Calu3 (cell line): ENCODE measurements at regions of chr1 and their contacts with region 1.

Region 1: GRCh38 chr1:38608202-38608864 is 251.2 kb downstream of the RRAGC start:
- DNase-seq: peak; percentile 42
- H3K4me3 Mint-ChIP-seq: no peak overlapping the region
- H3K27ac Mint-ChIP-seq: no peak overlapping the region
- H3K4me1 Mint-ChIP-seq: no peaks in the 10 kb centered on the region
- H3K27me3 Mint-ChIP-seq: peaks cover 76% of the 10 kb centered on the region
- CTCF ChIP-seq: peak; percentile 68

Region 2: GRCh38 chr1:38818175-38818976 is 210.0 kb after region 1 on chr1:
- CTCF ChIA-PET with region 1: interaction called, 8 read pairs
- intact Hi-C with region 1: loop called (anchors 5 kb)
- DNase-seq: peak; percentile 60
- H3K4me3 Mint-ChIP-seq: no peak overlapping the region
- H3K27ac Mint-ChIP-seq: no peak overlapping the region
- H3K4me1 Mint-ChIP-seq: no peaks in the 10 kb centered on the region
- H3K27me3 Mint-ChIP-seq: peaks cover 99% of the 10 kb centered on the region
- CTCF ChIP-seq: peak; percentile 93

Region 3: DNA sequence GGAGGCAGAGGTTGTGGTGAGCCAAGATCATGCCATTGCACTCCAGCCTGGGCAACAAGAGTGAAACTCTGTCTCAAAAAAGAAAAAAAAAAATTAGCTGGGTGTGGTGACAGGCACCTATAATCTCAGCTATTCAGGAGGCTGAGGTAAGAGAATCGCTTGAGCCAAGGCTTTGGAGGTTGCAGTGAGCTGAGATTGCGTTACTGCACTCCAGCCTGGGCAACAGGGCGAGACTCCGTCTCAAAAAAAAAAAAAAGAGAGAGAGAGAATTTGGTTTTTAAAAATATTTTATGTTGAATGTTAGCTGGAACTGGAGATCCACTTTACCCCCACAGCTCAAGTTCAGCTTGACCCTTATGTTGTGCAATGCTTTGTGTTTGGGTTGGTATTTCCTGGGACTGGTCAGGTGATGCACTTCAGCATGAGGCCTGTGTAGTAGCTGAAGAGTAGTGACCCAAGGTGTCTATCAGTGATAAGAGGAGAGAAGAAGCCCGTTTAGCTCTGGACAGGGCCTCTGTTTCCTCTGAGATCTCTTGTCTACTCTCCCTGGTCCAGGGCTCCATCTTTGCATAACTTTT is 559.4 kb after region 1 on chr1:
- CTCF ChIA-PET with region 1: no interaction called
- intact Hi-C with region 1: no loop called
- DNase-seq: no peak
- H3K4me3 Mint-ChIP-seq: no peak overlapping the region
- H3K27ac Mint-ChIP-seq: peak overlapping the region; percentile 58
- H3K4me1 Mint-ChIP-seq: peaks cover 51% of the 10 kb centered on the region
- H3K27me3 Mint-ChIP-seq: no peaks in the 10 kb centered on the region
- CTCF ChIP-seq: no peak